ENCODE measurements at regions of chr12 and their contacts with region 1.

Region 1: DNA sequence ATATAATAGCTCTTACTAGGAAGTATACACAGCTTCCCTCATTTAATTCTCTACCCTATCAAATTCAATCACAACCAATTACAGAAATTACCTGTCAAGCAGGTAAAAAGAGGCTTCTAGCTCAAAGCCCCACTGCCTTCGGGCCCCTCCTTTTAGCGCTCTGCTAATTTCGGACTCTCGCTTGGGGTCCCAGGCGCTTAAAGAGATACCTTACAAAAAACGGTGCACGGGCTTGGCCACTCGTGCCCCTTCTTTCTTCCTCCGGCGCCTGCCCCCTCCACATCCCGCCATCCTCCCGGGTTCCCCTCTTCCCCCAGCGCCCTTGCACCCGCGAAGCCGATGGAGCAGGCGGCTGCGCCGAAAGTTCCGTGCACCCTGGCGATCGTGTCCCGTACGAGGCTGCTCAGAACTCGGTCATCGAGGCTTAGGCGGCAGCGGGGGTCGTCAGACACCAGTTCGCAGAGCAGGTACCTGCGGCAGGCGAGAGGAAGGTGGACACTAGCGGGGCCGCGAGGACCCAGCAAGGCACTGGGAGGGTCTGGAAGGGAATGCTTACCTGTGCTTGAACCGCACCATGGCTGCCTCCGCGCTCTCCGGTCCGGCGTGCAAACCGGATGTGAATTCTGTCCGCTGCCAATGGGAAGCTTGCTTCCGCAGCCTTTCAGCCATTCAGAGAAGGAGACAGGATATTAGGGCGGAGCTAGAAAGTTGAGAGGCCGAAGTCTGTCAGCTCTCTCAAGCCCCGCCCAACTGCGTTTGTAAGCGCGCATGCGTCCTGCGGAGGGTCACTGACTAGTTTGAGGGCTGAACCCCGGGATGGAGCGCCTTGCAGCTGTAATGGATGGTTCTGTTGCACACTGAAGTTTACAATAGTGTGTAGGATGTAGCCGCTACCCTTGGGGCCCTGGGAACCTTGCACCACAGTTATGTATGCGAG is at the start of gene POP5:
- DNase-seq: peak; percentile 95
- H3K4me3 ChIP-seq: peak within 1 kb of the TSS; percentile 100
- H3K27ac ChIP-seq: peak within 1 kb of the TSS; percentile 47
- H3K27me3 ChIP-seq: peaks cover 8% of the 10 kb centered on the region
- CTCF ChIP-seq: no peak
- polyA plus RNA-seq, gene POP5: 49.8 and 54.0 TPM in 2 replicates

Region 2: GRCh38 chr12:120292661-120293531 is 288.2 kb before region 1 on chr12 and contains the start of gene RNU4-1:
- CTCF ChIA-PET with region 1: no interaction called
- POLR2A ChIA-PET with region 1: no interaction called
- DNase-seq: peak; percentile 95
- H3K4me3 ChIP-seq: peak within 1 kb of the TSS; percentile 62
- H3K27ac ChIP-seq: peak within 1 kb of the TSS; percentile 100
- H3K27me3 ChIP-seq: no peaks in the 10 kb centered on the region
- CTCF ChIP-seq: no peak
- polyA plus RNA-seq, gene RNU4-1: under 0.01 TPM in 1 of 2 replicates, not detected in the other

Region 3: GRCh38 chr12:120713861-120714482 is 132.9 kb after region 1 on chr12:
- CTCF ChIA-PET with region 1: interaction called, 21 read pairs
- POLR2A ChIA-PET with region 1: no interaction called
- DNase-seq: peak; percentile 58
- H3K4me3 ChIP-seq: no peak overlapping the region
- H3K27ac ChIP-seq: no peak overlapping the region
- H3K27me3 ChIP-seq: no peaks in the 10 kb centered on the region
- CTCF ChIP-seq: peak; percentile 88

Region 4: DNA sequence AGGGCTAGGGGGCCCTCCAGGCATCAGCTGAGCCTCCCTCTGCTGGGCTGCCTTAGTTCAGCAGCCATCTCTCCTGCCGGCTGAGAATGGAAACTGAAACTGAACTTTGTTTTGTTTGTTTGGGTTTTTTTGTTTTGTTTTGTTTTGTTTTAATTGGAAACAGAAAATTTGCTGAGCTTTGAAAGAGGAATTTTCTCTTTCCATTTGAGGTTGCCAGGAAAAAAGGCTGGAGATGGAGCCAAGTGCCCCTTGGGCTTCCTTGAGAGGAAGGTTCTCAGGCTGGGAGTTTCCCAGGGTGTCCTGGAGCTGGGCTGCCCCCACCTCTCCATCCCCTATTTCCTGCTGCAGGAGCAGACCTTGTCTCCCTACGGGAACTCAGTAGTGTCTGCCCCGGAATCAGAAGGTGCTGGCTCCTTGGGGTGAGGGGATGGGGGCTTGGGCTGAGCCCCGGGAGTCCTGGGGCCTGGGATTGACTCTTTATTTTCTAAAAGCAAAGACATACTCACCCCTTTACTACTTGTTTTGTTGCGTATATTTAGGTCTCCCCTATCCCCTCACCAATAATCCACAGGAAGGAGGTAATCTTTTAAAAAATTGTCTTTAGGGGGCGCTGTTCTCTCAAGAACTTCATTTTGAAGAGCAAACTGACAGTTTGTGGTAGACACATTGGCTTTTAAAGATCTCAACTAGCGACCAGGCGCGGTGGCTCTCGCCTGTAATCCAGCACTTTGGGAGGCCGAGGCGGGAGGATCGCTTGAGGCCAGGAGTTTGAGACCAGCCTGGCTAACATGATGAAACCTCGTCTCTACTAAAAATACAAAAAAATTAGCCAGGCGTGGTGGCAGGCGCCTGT is 479.3 kb after region 1 on chr12:
- CTCF ChIA-PET with region 1: interaction called, 16 read pairs
- POLR2A ChIA-PET with region 1: no interaction called
- DNase-seq: no peak
- H3K4me3 ChIP-seq: peak overlapping the region; percentile 43
- H3K27ac ChIP-seq: peak overlapping the region; percentile 47
- H3K27me3 ChIP-seq: peaks cover 2% of the 10 kb centered on the region
- CTCF ChIP-seq: peak; percentile 66

Measured in AG04450 (cell line).